OCI-LY7 (cell line): ENCODE measurements at regions of chr1 and their contacts with region 1.

Region 1: DNA sequence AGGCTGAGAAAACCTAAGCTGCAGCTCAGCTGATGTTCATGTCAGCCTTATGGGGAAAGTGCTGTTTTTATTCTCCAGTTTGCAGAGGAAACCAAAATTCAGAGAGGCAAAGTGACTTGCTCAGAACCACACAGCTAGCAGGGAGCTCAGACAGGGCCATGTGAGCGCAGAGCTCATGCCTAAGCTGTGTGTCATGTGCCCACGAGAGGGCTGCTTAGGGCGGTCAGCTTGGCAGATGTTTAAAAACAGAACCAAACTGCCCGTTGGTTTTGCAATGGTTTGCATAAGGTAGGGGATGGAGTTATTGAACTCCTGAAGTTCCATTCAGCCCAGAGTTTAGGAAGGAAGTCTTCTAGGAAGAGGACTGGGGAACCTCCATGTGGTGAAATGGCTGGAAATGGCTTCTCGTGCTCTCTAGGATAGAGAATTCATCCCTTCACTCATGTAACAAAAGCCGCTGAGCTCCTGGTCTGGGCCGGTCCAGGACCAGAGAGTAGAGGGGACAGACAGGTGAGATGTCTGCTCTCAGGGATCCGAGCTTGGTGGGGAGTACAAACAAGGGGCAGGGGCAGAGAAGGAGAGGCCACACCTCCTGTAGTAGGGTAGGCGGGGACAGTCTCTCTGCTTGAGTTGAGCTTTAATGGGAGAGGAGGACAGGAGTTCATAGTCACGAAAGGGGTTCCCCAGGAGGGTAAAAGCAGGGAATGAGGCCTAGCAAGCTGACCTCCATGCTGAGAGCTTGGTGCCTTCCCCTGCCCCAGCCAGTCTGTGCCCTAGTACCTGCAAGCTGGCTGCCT is 46.9 kb downstream of the ARHGEF10L start:
- DNase-seq: no peak
- H3K4me3 ChIP-seq: no peak overlapping the region
- H3K27ac ChIP-seq: no peak overlapping the region
- H3K4me1 ChIP-seq: peaks cover 3% of the 10 kb centered on the region
- CTCF ChIP-seq: no peak

Region 2: DNA sequence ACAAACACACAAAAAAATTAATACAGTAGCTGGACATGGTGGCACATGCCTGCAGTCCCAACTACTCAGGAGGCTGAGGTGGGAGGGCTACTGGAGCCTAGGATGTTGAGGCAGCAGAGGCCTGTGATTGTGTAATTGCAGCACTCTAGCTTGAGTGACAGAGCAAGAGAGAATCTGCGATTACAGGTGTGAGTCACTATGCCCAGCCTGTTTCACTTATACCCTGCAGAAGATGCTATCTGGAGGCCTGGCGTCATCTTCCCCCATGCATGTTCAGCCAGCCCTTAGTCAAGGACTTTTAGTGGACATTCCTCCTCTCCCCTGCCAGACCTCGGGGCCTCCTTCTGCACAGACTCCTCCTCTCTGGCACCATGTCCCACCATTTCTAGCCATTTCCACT is 110.6 kb before region 1 on chr1:
- CTCF ChIA-PET with region 1: no interaction called
- POLR2A ChIA-PET with region 1: no interaction called
- intact Hi-C with region 1: no loop called
- DNase-seq: no peak
- H3K4me3 ChIP-seq: no peak overlapping the region
- H3K27ac ChIP-seq: no peak overlapping the region
- H3K4me1 ChIP-seq: no peaks in the 10 kb centered on the region
- CTCF ChIP-seq: no peak

Region 3: GRCh38 chr1:17599301-17600300 is 13.2 kb after region 1 on chr1:
- CTCF ChIA-PET with region 1: no interaction called
- POLR2A ChIA-PET with region 1: interaction called, 10 read pairs
- intact Hi-C with region 1: no loop called
- DNase-seq: no peak
- H3K4me3 ChIP-seq: no peak overlapping the region
- H3K27ac ChIP-seq: no peak overlapping the region
- H3K4me1 ChIP-seq: no peaks in the 10 kb centered on the region
- CTCF ChIP-seq: no peak